Aorta (tissue), 5 donors: ENCODE measurements at regions of chr14 and their contacts with region 1.

Region 1: DNA sequence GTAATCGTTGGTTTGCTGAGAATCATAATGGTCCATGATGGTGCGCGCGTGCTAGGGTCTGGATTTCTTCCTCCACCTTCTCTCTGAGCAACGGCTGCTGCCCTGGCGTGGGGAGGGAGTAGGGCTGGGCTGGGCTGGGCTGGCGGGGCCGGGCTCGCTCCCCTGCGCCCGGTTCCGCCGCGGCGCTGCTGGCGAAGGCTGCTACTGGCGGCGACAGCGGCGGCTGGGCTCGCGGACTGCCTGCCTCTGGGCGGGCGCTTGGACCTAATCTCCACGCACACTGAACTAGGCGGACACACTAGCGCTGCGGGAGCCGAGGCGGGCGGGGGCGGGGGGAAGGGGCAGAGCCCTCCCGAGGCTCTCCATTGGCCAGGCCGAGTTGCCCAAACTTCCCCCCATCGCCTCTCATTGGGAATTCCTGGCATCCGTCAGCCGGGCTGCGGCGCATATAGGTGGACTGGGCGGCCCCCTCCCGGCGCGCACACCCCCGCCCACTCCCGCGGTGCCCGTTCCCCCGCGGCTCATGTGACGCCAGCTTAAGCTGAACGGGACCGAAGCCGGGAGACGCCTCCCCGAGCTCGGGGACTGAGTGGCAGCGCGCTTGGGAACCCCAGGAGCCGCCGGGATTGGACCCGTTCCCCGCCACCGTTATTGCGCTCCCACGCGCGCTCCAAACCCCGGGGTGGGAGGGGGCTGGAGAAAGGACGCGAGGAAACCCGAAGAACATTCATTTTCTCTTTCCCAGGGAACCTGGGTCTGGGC is at the start of gene ACTN1:
- DNase-seq: peak; percentile 97
- ATAC-seq: peak; percentile 86
- H3K4me3 ChIP-seq: peak within 1 kb of the TSS; percentile 76 to 95
- H3K27ac ChIP-seq: peak within 1 kb of the TSS; percentile 97 to 99
- H3K4me1 ChIP-seq: peaks cover 2 to 8% of the 10 kb centered on the region in 2 donors
- H3K27me3 ChIP-seq: no peaks in the 10 kb centered on the region
- total RNA-seq, gene ACTN1: 883 to 1,590 TPM

Region 2: DNA sequence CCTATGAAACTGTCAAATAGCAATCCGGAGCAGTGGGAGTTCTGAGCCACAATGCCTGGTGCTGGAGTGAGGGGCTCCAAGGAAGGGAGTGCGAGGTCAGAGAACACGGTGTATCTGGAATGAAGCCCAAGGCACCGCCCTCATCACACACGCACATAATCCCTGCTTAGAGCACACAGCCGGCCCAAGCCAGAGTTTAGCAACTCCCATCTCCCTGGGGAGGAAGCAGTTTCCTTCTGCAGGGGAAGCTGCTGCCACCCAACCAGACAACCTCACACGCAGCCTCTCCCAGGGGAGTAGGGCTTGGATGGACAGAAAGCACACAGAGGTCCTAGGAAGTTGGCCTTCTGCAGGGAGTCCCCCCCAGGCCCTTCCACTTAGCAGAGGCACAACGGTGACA is 31.4 kb before region 1 on chr14:
- intact Hi-C with region 1: loop called (anchors 2 to 5 kb)
- DNase-seq: peak; percentile 86 to 88
- ATAC-seq: peak; percentile 64
- H3K4me3 ChIP-seq: no peak overlapping the region
- H3K27ac ChIP-seq: peak overlapping the region; percentile 52 to 96
- H3K4me1 ChIP-seq: peaks cover 2 to 12% of the 10 kb centered on the region in 2 donors
- H3K27me3 ChIP-seq: no peaks in the 10 kb centered on the region

Region 3: DNA sequence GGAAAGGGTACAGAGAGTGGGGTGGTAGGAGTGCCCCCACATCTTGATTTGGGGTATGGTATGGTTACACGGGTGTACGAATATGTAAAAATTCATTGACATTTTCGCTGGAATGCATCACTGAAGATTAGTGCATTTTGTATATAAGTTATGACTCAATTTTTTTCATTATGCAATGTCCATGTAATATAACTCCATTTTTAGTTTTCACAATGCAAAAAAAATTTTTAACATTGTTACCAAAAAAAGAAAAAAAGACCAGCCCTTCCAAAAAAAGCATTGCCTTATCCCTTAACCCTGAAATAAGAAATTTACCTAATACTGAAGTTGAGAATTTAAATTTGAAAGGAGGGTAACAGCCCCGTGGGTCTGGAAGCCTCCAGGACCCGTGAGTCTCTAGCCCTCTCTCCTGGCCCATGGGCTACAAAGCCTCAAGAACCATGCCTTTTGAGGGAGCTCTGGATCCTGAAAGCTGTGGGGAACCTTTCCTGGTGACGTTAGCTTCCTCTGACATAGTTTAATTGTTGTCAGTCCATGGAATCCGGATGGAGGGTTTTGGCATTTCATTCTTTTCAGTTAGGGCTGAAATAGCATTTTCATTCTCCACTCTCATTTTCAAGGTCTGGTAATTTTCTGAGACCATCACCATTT is 55.5 kb after region 1 on chr14:
- intact Hi-C with region 1: loop called in 1 of 2 experiments (anchors 2 kb)
- DNase-seq: no peak
- ATAC-seq: no peak
- H3K4me3 ChIP-seq: no peak overlapping the region
- H3K27ac ChIP-seq: peak overlapping the region in 1 of 2 donors; percentile 2
- H3K4me1 ChIP-seq: peaks cover 3 to 4% of the 10 kb centered on the region in 2 donors
- H3K27me3 ChIP-seq: no peaks in the 10 kb centered on the region

Region 4: GRCh38 chr14:69079183-69079742 is 100.1 kb after region 1 on chr14:
- intact Hi-C with region 1: loop called in 1 of 2 experiments (anchors 2 kb)
- DNase-seq: no peak
- ATAC-seq: peak; percentile 57
- H3K4me3 ChIP-seq: no peak overlapping the region
- H3K27ac ChIP-seq: peak overlapping the region; percentile 89 to 97
- H3K4me1 ChIP-seq: peaks cover 0 to 6% of the 10 kb centered on the region in 2 donors
- H3K27me3 ChIP-seq: no peaks in the 10 kb centered on the region

Region 5: DNA sequence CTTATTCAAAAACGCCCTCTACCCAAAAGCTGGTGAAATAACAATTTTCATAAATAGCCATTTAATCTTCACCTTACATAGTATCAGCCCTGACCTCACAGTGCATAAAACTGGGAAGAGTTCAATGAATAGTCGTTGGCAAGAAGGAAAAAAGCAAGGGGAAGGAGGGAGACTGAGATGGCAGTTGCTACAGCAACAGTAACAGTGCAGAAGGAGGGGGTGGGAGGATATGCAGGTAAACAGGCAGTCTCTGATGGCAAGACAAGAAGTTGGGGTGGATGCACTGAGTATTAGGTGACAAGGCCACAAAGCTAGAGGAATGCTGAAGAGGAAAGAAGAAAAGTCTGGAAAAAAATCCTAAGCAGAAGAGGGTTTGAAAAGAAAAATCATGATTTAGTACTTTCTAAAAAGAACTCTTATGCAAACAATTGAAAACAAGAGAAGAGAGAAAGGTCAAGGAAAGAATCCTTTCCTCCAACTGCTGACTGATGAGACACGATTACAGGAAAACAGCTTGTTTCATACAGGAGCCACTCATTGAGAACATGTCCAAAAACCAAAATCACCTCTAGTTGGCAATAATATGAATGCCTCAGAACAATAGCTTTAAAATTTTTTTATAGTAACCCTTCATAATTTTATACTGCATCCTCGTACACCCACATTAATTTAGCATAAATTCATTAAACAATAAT is 117.7 kb after region 1 on chr14:
- intact Hi-C with region 1: loop called in 1 of 2 experiments (anchors 5 kb)
- DNase-seq: no peak
- ATAC-seq: no peak
- H3K4me3 ChIP-seq: no peak overlapping the region
- H3K27ac ChIP-seq: peak overlapping the region in 1 of 2 donors; percentile 63
- H3K4me1 ChIP-seq: peaks cover 0 to 3% of the 10 kb centered on the region in 2 donors
- H3K27me3 ChIP-seq: no peaks in the 10 kb centered on the region